B cell (primary cell): ENCODE measurements at regions of chr2 and their contacts with region 1.

Region 1: GRCh38 chr2:135985018-135985825 is at the start of gene DARS1:
- DNase-seq: peak; percentile 91
- ATAC-seq: peak; percentile 84
- H3K4me3 ChIP-seq: peak within 1 kb of the TSS; percentile 75 to 99 (median 93)
- H3K4me3 Mint-ChIP-seq: peak within 1 kb of the TSS; percentile 97
- H3K27ac ChIP-seq: peak within 1 kb of the TSS; percentile 94 to 97
- H3K27ac Mint-ChIP-seq: peak within 1 kb of the TSS; percentile 98
- H3K4me1 ChIP-seq: peaks cover 29 to 31% of the 10 kb centered on the region in 2 donors
- H3K4me1 Mint-ChIP-seq: peaks cover 50% of the 10 kb centered on the region
- H3K27me3 ChIP-seq: no peaks in the 10 kb centered on the region
- H3K27me3 Mint-ChIP-seq: no peaks in the 10 kb centered on the region
- CTCF ChIP-seq: no peak
- total RNA-seq, gene DARS1: 88.3 and 92.0 TPM in 2 replicates

Region 2: DNA sequence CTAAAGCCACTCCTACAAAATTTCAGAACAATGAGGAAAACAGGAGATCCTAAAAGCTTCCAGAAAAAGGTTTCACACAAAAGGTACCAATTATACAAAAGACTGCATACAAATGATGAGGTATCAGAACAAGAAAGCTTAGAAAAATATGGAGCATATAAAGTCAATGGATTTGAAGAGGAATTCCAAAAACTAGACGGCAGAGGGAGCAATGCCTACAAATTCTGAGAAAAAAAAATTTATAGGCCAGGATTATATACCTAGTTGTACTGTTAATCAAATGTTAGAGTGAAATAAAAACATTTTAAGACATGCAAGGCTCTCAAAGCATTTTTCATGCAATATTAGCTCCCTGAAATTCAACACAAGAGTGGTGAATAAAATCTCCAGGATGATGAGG is 560.4 kb before region 1 on chr2:
- CTCF ChIA-PET with region 1: no interaction called
- POLR2A ChIA-PET with region 1: no interaction called
- intact Hi-C with region 1: no loop called
- DNase-seq: no peak
- ATAC-seq: no peak
- H3K4me3 ChIP-seq: no peak overlapping the region
- H3K4me3 Mint-ChIP-seq: no peak overlapping the region
- H3K27ac ChIP-seq: no peak overlapping the region
- H3K27ac Mint-ChIP-seq: no peak overlapping the region
- H3K4me1 ChIP-seq: no peaks in the 10 kb centered on the region
- H3K4me1 Mint-ChIP-seq: no peaks in the 10 kb centered on the region
- H3K27me3 ChIP-seq: no peaks in the 10 kb centered on the region
- H3K27me3 Mint-ChIP-seq: no peaks in the 10 kb centered on the region
- CTCF ChIP-seq: no peak

Region 3: DNA sequence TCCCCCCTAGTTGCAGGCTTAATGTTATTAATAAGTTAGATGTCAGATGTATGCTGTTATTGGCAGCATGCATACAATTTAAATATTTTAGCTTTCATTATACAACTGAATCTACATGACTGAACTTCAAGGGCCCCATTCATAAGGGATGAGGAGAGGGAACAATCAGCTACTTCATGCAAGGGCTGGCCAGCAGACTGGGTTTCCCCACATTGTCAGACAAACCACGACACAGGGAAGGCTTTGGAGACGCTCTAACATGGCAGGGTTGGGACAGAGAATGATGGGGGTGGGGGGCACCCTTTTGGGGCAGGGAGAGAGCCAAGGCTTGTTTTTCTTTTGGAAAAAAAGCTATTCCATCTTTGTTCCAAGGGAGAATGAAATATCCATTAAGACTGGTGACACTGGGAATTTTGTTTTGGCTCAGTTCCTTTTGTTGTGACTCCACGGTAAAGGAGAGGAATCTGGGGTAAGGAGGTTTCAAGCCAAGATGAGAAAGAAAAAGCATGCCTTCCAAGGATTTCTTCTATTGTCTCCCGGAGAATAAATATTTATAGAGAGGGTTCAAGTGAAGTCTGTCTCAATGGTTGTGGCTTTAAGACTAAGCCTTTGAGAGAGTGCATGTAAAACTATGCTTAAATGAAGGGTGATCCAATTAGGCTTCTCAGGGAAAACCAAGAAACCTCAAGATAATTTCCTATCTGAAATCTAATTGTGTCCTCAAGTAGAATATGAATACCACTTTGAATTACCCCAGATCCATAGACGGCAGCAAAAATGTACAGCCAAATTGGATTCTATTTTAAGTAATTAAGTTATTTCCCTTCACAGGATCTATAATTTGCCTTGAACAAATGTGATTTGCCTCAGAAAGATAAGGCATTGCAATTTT is 127.3 kb after region 1 on chr2:
- CTCF ChIA-PET with region 1: interaction called, 3 read pairs
- POLR2A ChIA-PET with region 1: interaction called, 7 read pairs
- intact Hi-C with region 1: loop called (anchors 1 kb)
- DNase-seq: peak; percentile 48
- ATAC-seq: no peak
- H3K4me3 ChIP-seq: no peak overlapping the region
- H3K4me3 Mint-ChIP-seq: peak overlapping the region; percentile 98
- H3K27ac ChIP-seq: no peak overlapping the region
- H3K27ac Mint-ChIP-seq: peak overlapping the region; percentile 69
- H3K4me1 ChIP-seq: peaks cover 70 to 72% of the 10 kb centered on the region in 2 donors
- H3K4me1 Mint-ChIP-seq: peaks cover 74% of the 10 kb centered on the region
- H3K27me3 ChIP-seq: no peaks in the 10 kb centered on the region
- H3K27me3 Mint-ChIP-seq: no peaks in the 10 kb centered on the region
- CTCF ChIP-seq: no peak

Region 4: DNA sequence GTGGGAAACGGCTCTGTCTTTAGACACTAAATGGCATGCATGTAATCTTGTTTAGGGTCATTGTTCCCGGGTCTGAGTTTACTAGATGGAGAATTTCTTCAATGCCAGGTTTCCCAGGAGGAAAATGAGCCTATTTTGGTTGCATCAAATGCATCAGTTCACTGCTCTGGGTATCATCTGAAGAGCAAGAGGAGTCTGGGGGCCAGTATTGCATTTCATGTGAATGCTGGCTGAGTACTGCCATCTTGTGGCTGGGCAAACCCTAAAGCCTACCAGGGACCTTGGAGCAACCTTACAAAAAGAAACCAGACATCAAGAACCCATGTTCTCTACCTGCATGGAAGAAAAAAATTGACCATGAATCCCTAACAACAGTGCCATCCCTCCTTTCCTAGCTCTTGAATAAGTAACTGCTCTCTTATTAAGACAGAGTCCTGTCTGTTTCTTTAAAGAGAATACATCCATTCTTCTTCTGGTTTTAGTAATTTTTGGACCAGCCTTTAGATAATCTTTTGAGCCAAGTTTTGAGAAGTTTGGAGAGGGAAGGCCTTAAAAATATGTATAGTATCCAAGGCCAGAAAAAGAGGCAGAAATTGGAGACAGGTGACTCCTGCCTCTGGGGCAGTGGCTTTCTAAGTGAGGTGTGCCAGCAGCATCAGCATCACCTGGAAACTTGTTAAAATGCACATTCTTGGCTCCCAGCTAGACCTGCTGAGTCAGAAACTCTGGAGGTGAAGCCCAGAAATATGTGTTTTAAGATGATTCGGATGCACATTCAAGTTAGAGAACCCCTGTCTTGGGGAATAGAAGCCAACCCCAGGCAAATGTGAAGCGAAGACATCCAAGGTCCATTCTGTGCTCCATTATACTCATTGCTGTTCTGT is 393.7 kb after region 1 on chr2:
- CTCF ChIA-PET with region 1: interaction called, 15 read pairs
- POLR2A ChIA-PET with region 1: interaction called, 7 read pairs
- intact Hi-C with region 1: loop called (anchors 2 kb)
- DNase-seq: peak; percentile 90
- ATAC-seq: peak; percentile 29
- H3K4me3 ChIP-seq: peak overlapping the region in 1 of 5 experiments; percentile 8
- H3K4me3 Mint-ChIP-seq: peak overlapping the region; percentile 49
- H3K27ac ChIP-seq: peak overlapping the region in 1 of 2 donors; percentile 71
- H3K27ac Mint-ChIP-seq: peak overlapping the region; percentile 97
- H3K4me1 ChIP-seq: peaks cover 61 to 65% of the 10 kb centered on the region in 2 donors
- H3K4me1 Mint-ChIP-seq: peaks cover 81% of the 10 kb centered on the region
- H3K27me3 ChIP-seq: no peaks in the 10 kb centered on the region
- H3K27me3 Mint-ChIP-seq: no peaks in the 10 kb centered on the region
- CTCF ChIP-seq: peak; percentile 88